ENCODE measurements at regions of chr12 and their contacts with region 1.

Region 1: GRCh38 chr12:57744777-57745484 is at the start of gene TSPAN31:
- DNase-seq: peak; percentile 97
- H3K4me3 Mint-ChIP-seq: peak within 1 kb of the TSS; percentile 77
- H3K27ac Mint-ChIP-seq: peak within 1 kb of the TSS; percentile 93
- H3K4me1 Mint-ChIP-seq: peaks cover 53% of the 10 kb centered on the region
- H3K27me3 Mint-ChIP-seq: no peaks in the 10 kb centered on the region
- total RNA-seq, gene TSPAN31: 21.8 to 23.0 TPM

Region 2: DNA sequence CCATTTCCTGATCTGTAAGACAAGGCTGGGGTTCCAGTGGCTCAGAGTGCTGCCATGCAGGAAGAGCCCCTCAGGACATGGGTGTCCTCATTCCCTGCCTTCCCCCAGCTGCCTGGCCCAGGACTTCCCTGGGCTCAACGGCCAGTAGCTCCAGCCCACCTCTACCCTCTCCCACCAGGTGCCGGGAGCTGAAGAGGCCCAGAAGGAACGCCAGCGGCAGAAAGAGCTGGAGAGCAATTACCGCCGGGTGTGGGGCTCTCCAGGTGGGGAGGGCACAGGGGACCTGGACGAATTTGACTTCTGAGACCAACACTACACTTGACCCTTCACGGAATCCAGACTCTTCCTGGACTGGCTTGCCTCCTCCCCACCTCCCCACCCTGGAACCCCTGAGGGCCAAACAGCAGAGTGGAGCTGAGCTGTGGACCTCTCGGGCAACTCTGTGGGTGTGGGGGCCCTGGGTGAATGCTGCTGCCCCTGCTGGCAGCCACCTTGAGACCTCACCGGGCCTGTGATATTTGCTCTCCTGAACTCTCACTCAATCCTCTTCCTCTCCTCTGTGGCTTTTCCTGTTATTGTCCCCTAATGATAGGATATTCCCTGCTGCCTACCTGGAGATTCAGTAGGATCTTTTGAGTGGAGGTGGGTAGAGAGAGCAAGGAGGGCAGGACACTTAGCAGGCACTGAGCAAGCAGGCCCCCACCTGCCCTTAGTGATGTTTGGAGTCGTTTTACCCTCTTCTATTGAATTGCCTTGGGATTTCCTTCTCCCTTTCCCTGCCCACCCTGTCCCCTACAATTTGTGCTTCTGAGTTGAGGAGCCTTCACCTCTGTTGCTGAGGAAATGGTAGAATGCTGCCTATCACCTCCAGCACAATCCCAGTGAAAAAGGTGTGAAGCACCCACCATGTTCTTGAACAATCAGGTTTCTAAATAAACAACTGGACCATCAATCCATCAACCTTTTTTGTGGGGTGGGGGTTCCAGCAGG is 24.0 kb before region 1 on chr12:
- CTCF ChIA-PET with region 1: interaction called, 10 read pairs
- POLR2A ChIA-PET with region 1: interaction called, 27 read pairs
- DNase-seq: no peak
- H3K4me3 Mint-ChIP-seq: no peak overlapping the region
- H3K27ac Mint-ChIP-seq: no peak overlapping the region
- H3K4me1 Mint-ChIP-seq: peaks cover 2% of the 10 kb centered on the region
- H3K27me3 Mint-ChIP-seq: no peaks in the 10 kb centered on the region

Region 3: DNA sequence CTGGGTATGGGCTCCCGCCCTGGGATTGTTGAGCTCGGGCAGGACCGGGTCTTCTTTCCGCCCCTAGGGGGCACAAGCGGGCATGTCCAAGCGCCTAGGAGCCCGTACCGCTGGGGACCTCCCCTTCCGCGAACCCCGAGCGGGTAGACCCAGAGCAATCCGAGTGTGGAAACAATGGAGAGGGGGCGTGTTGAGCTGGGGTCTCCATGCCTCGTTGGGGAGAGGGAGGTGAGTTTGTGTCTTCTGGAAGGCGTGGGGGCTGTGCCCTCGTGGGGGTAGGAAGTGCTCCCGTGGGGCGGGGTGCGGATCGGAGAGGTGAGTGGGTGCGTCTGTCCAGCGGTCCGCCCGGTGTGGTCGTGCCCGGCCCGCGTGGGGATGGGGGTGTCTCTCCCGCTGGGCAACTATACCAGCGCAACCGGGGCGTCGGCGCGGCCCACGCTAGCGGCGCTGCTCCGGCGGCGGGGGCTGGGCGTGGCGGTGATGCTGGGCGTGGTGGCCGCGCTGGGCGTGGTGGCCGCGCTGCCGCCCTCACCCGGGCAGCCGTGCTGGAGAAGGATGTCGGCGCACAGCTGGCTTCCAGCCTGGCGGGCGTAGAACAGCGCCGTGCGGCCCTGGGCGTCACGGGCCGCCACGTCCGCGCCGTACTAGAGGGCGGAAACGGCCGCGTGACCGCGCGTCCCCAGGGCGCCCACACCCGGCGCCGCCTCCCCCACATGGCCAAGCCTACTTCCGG is 18.6 kb before region 1 on chr12:
- CTCF ChIA-PET with region 1: interaction called, 10 read pairs
- POLR2A ChIA-PET with region 1: interaction called, 27 read pairs
- DNase-seq: no peak
- H3K4me3 Mint-ChIP-seq: no peak overlapping the region
- H3K27ac Mint-ChIP-seq: no peak overlapping the region
- H3K4me1 Mint-ChIP-seq: peaks cover 2% of the 10 kb centered on the region
- H3K27me3 Mint-ChIP-seq: no peaks in the 10 kb centered on the region